ENCODE measurements at regions of chr3 and their contacts with region 1.

Region 1: DNA sequence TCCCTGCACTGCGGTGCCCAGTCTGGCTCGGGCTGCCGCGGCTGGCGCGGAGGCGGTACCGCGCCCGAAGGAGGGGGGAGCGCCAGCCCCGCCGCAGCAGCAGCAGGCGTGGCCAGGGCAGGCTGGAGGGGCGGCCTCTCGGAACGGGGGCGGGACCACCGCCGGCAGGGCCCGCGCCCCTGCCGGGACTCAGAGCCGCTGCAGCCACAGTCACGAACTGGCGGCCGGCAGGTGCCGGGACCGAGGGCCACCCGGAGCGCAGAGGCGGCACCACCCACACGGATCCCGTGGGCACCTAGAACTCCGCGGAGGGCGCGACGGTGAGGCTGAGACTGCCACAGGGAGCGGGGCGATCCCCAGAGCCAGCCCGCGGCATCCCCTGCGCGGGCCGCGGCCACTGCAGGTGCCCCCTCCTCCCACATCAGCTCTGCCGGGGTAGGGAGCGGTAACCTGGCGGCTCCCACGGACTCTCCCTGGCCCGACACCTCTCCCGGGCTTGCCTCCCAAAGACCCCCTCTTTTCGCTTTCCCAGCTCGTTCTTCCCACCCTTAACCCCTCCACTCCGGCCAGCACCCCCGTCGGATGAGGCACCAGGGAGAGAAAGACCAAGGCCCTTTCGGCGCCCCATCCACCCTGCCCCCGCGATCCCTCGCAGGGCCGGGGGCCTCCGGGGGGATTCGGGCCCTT is at the start of gene VWA5B2:
- DNase-seq: peak; percentile 78
- ATAC-seq: peak; percentile 91
- H3K4me3 Mint-ChIP-seq: peak within 1 kb of the TSS; percentile 73
- H3K27ac Mint-ChIP-seq: no peak within 1 kb of the TSS
- H3K4me1 Mint-ChIP-seq: peaks cover 8% of the 10 kb centered on the region; the same call in 1 of the 2 replicates
- H3K27me3 Mint-ChIP-seq: peaks cover 75% of the 10 kb centered on the region
- CTCF ChIP-seq: no peak
- total RNA-seq, gene VWA5B2: 0.44 to 0.57 TPM (median 0.55 TPM) in 3 replicates

Region 2: GRCh38 chr3:184154885-184155643 is 74.5 kb before region 1 on chr3 and contains the start of gene DVL3:
- CTCF ChIA-PET with region 1: interaction called, 12 read pairs
- POLR2A ChIA-PET with region 1: no interaction called
- DNase-seq: peak; percentile 67
- ATAC-seq: peak; percentile 77
- H3K4me3 Mint-ChIP-seq: peak within 1 kb of the TSS; percentile 95
- H3K27ac Mint-ChIP-seq: peak within 1 kb of the TSS; percentile 95
- H3K4me1 Mint-ChIP-seq: peaks cover 16% of the 10 kb centered on the region
- H3K27me3 Mint-ChIP-seq: no peaks in the 10 kb centered on the region
- CTCF ChIP-seq: no peak
- total RNA-seq, gene DVL3: 64.5 to 76.2 TPM (median 66.5 TPM) in 3 replicates

Region 3: GRCh38 chr3:184185461-184186308 is 43.9 kb before region 1 on chr3 and contains the start of gene ABCF3:
- CTCF ChIA-PET with region 1: interaction called, 17 read pairs
- POLR2A ChIA-PET with region 1: no interaction called
- DNase-seq: peak; percentile 99
- ATAC-seq: peak; percentile 89
- H3K4me3 Mint-ChIP-seq: peak within 1 kb of the TSS; percentile 98
- H3K27ac Mint-ChIP-seq: peak within 1 kb of the TSS; percentile 97
- H3K4me1 Mint-ChIP-seq: peaks cover 23% of the 10 kb centered on the region
- H3K27me3 Mint-ChIP-seq: no peaks in the 10 kb centered on the region
- CTCF ChIP-seq: no peak
- total RNA-seq, gene ABCF3: 49.7 to 63.6 TPM (median 50.0 TPM) in 3 replicates

Region 4: DNA sequence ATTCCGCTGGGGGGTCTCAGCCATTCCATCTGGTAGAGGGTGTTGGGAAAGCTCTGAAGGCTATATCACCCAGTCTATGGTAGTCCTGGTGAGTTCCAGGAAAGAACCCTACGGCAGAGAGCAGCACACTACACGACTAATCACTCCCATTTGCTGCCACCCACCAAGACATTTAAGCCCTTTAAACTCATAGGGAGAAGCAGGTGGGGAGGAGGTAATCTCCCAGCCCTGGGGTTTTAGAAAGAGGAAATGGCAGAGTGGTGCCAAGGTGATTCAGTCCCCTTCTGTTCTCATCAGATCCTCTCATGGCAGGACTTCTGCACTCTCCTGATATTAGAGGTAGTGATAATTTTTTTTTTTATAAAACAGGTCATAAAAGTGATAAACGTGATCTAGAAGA is 10.7 kb before region 1 on chr3:
- CTCF ChIA-PET with region 1: interaction called, 30 read pairs
- POLR2A ChIA-PET with region 1: interaction called, 4 read pairs
- DNase-seq: no peak
- ATAC-seq: no peak
- H3K4me3 Mint-ChIP-seq: no peak overlapping the region
- H3K27ac Mint-ChIP-seq: no peak overlapping the region
- H3K4me1 Mint-ChIP-seq: no peaks in the 10 kb centered on the region
- H3K27me3 Mint-ChIP-seq: no peaks in the 10 kb centered on the region
- CTCF ChIP-seq: no peak

Region 5: DNA sequence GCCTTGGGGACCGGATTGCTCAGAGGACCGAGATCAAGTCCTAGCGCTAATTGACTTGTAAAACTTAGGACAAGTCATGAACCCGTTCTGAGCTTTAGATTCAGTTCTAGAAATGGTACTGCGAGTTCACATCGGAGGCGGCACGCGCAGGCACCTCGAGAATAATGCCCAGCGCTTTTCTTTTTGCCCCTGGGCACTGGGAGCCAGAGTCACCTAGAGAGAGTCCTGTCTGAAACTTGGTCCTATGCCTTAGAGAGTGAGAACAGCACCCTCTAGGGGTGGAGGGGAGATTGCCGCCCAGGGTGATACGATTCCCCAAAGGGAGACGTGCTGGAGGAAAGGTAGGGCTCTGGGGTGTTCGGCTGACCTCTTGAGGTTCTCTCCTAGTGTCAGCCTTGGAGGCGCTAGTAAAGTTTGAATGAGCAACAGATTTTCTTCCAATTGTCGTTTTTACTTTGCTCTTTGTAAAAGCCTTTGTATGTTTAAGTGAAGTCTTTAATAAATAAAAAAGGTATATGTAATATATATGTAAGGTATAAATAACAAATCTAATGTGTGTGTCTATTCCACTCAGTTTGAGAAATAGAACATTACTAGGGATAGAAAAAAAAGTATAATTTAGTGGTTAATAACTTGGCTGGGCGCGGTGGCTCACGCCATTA is 20.8 kb after region 1 on chr3:
- CTCF ChIA-PET with region 1: interaction called, 22 read pairs
- POLR2A ChIA-PET with region 1: no interaction called
- DNase-seq: peak; percentile 98
- ATAC-seq: peak; percentile 72
- H3K4me3 Mint-ChIP-seq: peak overlapping the region; percentile 98
- H3K27ac Mint-ChIP-seq: peak overlapping the region; percentile 57; the same call in 1 of the 2 replicates
- H3K4me1 Mint-ChIP-seq: 0 out of 2 replicates have a peak, but pooled peaks cover 5% of the 10 kb centered on the region
- H3K27me3 Mint-ChIP-seq: no peaks in the 10 kb centered on the region
- CTCF ChIP-seq: peak; percentile 77

Region 6: DNA sequence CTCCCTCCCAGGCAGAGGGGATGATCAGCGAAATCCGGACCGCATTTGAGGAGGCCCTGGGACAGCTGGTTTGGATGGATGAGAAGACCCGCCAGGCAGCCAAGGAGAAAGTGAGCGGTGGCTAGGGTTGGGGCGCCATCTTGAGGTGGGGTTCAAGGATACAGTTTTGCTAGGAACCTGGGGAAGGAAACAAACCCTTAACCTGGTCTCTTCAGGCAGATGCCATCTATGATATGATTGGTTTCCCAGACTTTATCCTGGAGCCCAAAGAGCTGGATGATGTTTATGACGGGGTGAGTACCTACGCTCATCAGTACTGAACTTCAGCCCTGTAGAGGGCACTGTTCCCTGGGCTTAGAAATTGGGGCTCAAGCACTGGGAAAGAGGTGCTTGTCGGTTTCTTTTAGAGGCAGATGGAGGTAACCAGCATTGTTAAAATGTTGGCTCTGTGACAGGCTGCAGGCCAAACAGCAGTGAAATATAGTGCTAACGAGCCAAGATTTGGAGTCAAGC is 59.9 kb after region 1 on chr3:
- CTCF ChIA-PET with region 1: interaction called, 18 read pairs
- POLR2A ChIA-PET with region 1: interaction called, 5 read pairs
- DNase-seq: peak; percentile 88
- ATAC-seq: peak; percentile 76
- H3K4me3 Mint-ChIP-seq: no peak overlapping the region
- H3K27ac Mint-ChIP-seq: no peak overlapping the region
- H3K4me1 Mint-ChIP-seq: peaks cover 5% of the 10 kb centered on the region; the same call in 1 of the 2 replicates
- H3K27me3 Mint-ChIP-seq: no peaks in the 10 kb centered on the region; the same call in 1 of the 2 replicates
- CTCF ChIP-seq: peak; percentile 52

Measured in WTC11 (cell line).